ENCODE measurements at regions of chr12 and their contacts with region 1.

Region 1: DNA sequence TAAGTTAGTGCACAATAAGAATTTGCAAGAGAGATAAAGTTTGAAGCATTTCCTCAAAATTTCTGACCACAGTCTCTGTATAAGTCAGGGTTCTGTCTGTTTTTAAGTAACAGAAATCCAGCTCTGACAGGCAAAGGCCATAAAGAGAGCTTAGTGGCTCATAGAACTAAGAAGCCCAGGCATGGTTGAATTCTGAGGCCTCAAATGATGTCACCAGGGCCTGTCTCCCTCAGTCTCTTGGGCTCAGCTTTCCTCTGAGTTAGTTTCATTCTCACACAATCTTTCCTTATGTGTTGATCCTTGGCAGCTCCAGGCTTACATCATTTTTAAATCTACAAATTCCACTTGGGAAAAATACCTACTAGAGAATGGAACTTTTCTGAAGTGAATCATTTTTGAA is 173.4 kb upstream of the ATP2B1 start:
- DNase-seq: peak; percentile 65
- H3K4me3 Mint-ChIP-seq: no peak overlapping the region
- H3K27ac Mint-ChIP-seq: peak overlapping the region; percentile 70
- H3K4me1 Mint-ChIP-seq: peaks cover 40% of the 10 kb centered on the region
- H3K27me3 Mint-ChIP-seq: no peaks in the 10 kb centered on the region

Region 2: DNA sequence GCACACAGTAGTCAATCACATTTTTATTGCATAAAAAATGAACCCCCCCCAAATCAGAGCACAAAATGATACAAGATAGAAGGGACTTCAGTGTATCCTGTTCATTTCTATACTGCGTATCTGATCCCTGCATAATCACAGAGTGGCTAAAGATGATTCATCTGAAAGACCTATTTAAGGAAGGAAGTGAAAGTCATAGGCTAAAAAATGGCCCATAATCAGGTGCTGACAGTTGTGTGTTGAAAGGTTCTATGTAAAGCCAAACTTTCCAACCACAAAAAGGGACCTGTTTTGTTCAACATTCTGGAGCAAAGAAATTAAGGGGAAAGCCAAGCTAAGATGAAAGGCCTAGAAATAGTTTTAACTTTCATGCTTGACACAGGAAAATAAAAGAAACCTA is 25.6 kb before region 1 on chr12:
- CTCF ChIA-PET with region 1: no interaction called
- POLR2A ChIA-PET with region 1: no interaction called
- intact Hi-C with region 1: loop called (anchors 1 kb)
- DNase-seq: no peak
- H3K4me3 Mint-ChIP-seq: no peak overlapping the region
- H3K27ac Mint-ChIP-seq: peak overlapping the region; percentile 43
- H3K4me1 Mint-ChIP-seq: peaks cover 52% of the 10 kb centered on the region
- H3K27me3 Mint-ChIP-seq: no peaks in the 10 kb centered on the region

Region 3: GRCh38 chr12:89935825-89936224 is 53.8 kb after region 1 on chr12:
- CTCF ChIA-PET with region 1: no interaction called
- POLR2A ChIA-PET with region 1: no interaction called
- intact Hi-C with region 1: loop called (anchors 2 kb)
- DNase-seq: peak; percentile 28
- H3K4me3 Mint-ChIP-seq: peak overlapping the region; percentile 5
- H3K27ac Mint-ChIP-seq: peak overlapping the region; percentile 55
- H3K4me1 Mint-ChIP-seq: peaks cover 38% of the 10 kb centered on the region
- H3K27me3 Mint-ChIP-seq: no peaks in the 10 kb centered on the region

Region 4: DNA sequence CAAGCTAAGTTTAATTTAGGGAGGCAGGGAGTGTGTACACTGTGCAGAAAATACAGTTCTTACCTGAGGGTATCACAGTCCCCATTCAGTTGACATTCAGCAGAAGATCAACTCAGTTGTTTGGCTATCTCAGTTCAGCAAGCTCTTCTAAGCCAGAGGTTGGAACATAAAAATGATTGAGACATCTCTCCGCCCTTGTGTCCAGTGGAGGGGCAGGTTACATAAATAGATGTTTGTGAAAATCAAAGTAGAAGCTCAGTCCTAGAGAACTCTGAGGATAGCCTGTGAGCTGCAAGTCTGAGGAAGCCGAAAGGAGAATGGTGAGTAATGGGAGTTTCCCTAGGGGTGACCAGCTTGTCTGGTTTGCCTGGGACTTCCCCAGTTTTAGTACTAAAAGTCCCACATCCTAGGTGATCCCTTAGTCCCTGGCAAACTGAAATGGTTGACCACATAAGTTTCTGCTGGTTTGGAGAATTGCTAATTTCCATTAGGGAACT is 78.0 kb after region 1 on chr12:
- CTCF ChIA-PET with region 1: no interaction called
- POLR2A ChIA-PET with region 1: no interaction called
- intact Hi-C with region 1: loop called (anchors 2 kb)
- DNase-seq: peak; percentile 57
- H3K4me3 Mint-ChIP-seq: no peak overlapping the region
- H3K27ac Mint-ChIP-seq: no peak overlapping the region
- H3K4me1 Mint-ChIP-seq: peaks cover 14% of the 10 kb centered on the region
- H3K27me3 Mint-ChIP-seq: no peaks in the 10 kb centered on the region

Region 5: GRCh38 chr12:90076851-90077319 is 194.8 kb after region 1 on chr12:
- CTCF ChIA-PET with region 1: no interaction called
- POLR2A ChIA-PET with region 1: no interaction called
- intact Hi-C with region 1: loop called (anchors 5 kb)
- DNase-seq: no peak
- H3K4me3 Mint-ChIP-seq: no peak overlapping the region
- H3K27ac Mint-ChIP-seq: peak overlapping the region; percentile 21
- H3K4me1 Mint-ChIP-seq: peaks cover 31% of the 10 kb centered on the region
- H3K27me3 Mint-ChIP-seq: no peaks in the 10 kb centered on the region

Measured in activated CD4-positive, alpha-beta memory T cell treated with anti-CD3 and anti-CD28 coated beads for 36 hours (primary cell).